ENCODE measurements at regions of chrX and their contacts with region 1.

Region 1: DNA sequence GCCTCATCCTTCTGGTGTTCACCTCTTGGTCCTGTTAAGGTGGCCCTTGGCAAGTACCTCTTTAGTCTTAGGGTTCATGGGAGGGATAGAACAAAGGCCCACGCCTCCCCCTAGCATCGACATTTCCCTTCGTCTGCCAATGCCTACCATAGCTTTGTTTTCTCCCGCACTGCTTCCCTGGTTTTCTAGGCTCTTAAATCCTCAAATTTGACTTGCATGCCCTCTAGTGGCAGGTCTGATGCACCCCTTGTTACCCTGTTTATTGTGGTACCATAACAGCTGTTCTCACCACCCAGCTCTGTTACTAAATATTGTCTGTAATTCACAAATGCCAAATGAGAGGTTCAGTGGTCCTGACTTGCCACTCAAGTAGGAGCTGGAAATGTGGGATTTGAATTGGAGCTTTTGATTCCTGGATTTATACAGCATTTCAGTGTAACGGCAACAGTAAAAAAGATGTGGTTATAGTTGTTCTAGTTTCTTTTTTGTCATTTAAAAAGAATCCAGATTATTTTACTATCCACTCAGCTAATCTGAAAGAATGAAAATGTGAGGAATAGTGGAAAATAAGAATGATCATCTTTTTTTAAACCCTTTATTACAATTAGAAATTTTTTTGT is 100.1 kb downstream of the REPS2 start:
- DNase-seq: peak; percentile 80
- H3K4me3 Mint-ChIP-seq: no peak overlapping the region
- H3K27ac Mint-ChIP-seq: peak overlapping the region; percentile 32
- H3K4me1 Mint-ChIP-seq: peaks cover 5% of the 10 kb centered on the region
- H3K27me3 Mint-ChIP-seq: peaks cover 74% of the 10 kb centered on the region
- CTCF ChIP-seq: peak; percentile 87

Region 2: GRCh38 chrX:15724911-15725310 is 1321.7 kb before region 1 on chrX:
- CTCF ChIA-PET with region 1: no interaction called
- POLR2A ChIA-PET with region 1: no interaction called
- intact Hi-C with region 1: no loop called
- DNase-seq: no peak
- H3K4me3 Mint-ChIP-seq: no peak overlapping the region
- H3K27ac Mint-ChIP-seq: no peak overlapping the region
- H3K4me1 Mint-ChIP-seq: no peaks in the 10 kb centered on the region
- H3K27me3 Mint-ChIP-seq: no peaks in the 10 kb centered on the region
- CTCF ChIP-seq: no peak

Region 3: DNA sequence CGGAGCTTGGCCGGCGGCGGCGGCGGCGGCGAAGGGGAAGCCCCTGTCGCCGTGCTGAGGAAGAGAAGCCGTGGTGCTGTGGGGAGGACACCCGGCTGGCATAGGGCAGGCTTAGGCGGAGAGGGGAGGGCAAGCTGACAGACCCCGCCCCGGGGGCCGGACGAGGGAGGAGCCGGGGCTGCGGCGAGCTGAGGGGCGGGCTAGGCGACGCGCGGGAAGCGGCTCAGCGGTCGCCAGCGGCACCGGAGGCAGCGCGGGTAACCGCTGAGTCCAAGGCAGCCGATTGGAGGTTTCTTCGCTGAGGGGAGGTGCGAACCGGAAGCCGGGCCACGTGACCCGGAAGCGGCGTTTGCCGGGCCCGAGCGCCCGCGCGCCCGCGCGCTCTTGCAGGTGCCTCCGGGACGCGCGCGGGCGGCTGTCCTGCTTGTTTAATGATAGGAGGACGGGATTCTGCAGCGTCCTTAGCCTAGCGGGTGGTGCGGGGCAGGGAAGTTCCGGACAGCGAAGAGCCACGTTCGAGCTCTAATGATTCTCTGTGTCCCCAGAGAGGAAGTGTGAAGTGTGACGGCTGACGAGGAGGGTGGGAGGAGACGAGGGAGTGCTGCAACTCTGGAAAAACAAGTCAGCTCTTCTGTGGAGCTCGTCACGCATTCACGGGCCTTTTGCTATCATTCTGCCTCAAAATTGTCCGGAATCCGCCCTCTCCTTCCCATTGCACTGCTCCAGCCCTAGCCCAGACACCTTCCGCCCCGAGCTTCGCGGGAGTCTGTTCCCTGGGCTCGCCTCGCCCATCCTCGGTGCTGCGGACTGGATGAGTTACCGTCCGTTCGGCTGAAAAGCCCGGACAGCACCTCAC is 1191.6 kb before region 1 on chrX and contains the start of gene AP1S2:
- CTCF ChIA-PET with region 1: no interaction called
- POLR2A ChIA-PET with region 1: no interaction called
- intact Hi-C with region 1: no loop called
- DNase-seq: peak; percentile 96
- H3K4me3 Mint-ChIP-seq: peak within 1 kb of the TSS; percentile 93
- H3K27ac Mint-ChIP-seq: peak within 1 kb of the TSS; percentile 61
- H3K4me1 Mint-ChIP-seq: peaks cover 6% of the 10 kb centered on the region
- H3K27me3 Mint-ChIP-seq: peaks cover 27% of the 10 kb centered on the region
- CTCF ChIP-seq: no peak
- total RNA-seq, gene AP1S2: 8.4 and 9.4 TPM in 2 replicates

Region 4: DNA sequence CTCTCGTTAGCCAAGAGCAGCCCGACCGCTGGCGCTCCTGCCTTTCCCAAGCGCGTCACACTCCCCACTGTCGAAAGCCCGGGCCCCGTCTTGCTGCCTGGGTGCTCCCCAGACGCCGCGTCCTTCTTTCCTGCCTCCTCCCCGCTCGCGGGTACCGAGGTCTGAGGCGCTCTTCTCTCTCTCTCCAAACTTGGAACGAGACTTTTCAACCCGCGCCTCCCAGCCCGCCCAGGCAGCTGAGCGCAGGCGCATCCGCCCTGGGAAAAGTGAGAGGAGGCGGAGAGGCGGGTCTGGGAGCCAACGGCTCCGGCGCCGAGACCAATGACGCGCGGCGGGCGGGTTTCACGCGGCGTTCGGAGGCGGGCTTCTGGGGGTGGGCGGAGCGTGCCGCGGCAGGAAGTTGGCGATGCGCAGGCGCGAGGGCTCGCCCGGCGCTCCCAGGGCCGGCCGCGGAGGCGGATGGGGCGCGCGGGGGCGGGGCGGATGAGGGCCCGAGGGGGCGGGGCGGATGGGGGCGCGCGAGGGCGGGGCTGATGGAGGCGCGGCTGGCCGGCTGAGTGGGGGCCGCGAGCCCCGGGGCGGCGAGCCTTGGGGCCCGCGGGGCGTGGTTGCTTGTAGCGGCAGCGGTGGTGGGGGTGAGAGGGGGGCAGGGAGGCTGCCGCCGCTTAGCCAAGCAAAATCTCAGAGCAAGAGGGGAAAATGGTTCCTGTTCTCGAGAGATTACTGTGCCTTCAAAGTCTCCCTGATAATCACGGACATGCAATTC is 176.3 kb before region 1 on chrX and contains the start of gene RBBP7:
- CTCF ChIA-PET with region 1: interaction called, 19 read pairs
- POLR2A ChIA-PET with region 1: no interaction called
- intact Hi-C with region 1: no loop called
- DNase-seq: peak; percentile 94
- H3K4me3 Mint-ChIP-seq: peak within 1 kb of the TSS; percentile 98
- H3K27ac Mint-ChIP-seq: peak within 1 kb of the TSS; percentile 90
- H3K4me1 Mint-ChIP-seq: peaks cover 15% of the 10 kb centered on the region
- H3K27me3 Mint-ChIP-seq: peaks cover 30% of the 10 kb centered on the region
- CTCF ChIP-seq: no peak
- total RNA-seq, gene RBBP7: 81.9 and 95.2 TPM in 2 replicates

Region 5: GRCh38 chrX:16892504-16893362 is 153.9 kb before region 1 on chrX:
- CTCF ChIA-PET with region 1: interaction called, 252 read pairs
- POLR2A ChIA-PET with region 1: interaction called, 3 read pairs
- intact Hi-C with region 1: no loop called
- DNase-seq: peak; percentile 88
- H3K4me3 Mint-ChIP-seq: no peak overlapping the region
- H3K27ac Mint-ChIP-seq: no peak overlapping the region
- H3K4me1 Mint-ChIP-seq: peaks cover 6% of the 10 kb centered on the region
- H3K27me3 Mint-ChIP-seq: peaks cover 67% of the 10 kb centered on the region
- CTCF ChIP-seq: peak; percentile 86

Region 6: DNA sequence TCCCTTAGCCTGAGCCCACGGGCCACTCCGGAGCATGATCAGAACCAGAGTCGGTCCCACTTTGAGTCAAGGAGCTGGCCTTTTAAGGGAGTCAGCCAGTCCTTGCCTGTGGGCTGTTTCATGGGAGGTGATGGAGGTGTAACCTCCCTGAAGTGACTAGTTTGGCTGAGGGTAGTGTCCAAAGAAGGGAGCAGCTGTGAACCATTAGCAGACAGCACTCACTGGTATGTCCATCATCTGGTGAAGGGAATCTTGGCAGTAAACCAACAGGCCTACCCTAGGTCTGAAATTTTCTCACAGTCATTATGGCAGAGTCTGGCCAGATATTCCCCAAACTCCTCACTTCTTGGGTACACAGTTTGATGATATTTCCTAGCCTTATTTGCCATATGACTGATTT is 112.4 kb before region 1 on chrX:
- CTCF ChIA-PET with region 1: no interaction called
- POLR2A ChIA-PET with region 1: no interaction called
- intact Hi-C with region 1: no loop called
- DNase-seq: no peak
- H3K4me3 Mint-ChIP-seq: no peak overlapping the region
- H3K27ac Mint-ChIP-seq: no peak overlapping the region
- H3K4me1 Mint-ChIP-seq: peaks cover 10% of the 10 kb centered on the region
- H3K27me3 Mint-ChIP-seq: peaks cover 81% of the 10 kb centered on the region
- CTCF ChIP-seq: no peak

Region 7: DNA sequence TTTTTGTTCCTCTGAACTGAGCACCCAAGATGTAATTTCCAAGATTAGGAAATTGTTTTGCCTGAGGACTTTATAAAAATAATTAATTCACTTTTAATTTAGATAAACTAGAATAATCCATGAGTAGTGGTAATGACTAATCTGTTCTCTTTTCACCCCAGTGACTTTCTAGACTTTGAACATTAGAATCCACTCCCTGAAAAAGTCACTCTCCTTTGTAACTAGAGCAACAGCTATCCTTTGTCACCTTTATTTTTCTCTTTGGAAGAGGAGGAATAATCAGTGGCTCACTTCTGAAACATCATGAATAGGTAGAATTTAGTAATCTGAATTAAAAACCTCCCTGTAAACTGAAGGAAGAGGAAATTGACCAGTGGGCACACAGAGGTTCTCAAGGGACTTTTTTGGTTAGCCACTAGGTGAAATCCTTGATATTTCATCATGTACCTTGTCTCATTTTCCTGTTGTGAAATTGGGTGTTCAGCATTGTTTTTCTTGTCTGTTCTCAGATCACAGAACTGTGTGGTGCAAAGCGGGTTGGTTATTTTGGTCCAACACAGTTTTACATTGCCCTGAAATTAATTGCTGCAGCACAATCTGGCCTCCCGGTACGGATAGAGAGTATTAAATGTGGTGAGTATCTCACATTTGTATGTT is 40.7 kb before region 1 on chrX:
- CTCF ChIA-PET with region 1: interaction called, 3 read pairs
- POLR2A ChIA-PET with region 1: no interaction called
- intact Hi-C with region 1: loop called (anchors 1 kb)
- DNase-seq: peak; percentile 69
- H3K4me3 Mint-ChIP-seq: peak overlapping the region; percentile 71
- H3K27ac Mint-ChIP-seq: peak overlapping the region; percentile 85
- H3K4me1 Mint-ChIP-seq: peaks cover 13% of the 10 kb centered on the region
- H3K27me3 Mint-ChIP-seq: peaks cover 89% of the 10 kb centered on the region
- CTCF ChIP-seq: no peak

Region 8: DNA sequence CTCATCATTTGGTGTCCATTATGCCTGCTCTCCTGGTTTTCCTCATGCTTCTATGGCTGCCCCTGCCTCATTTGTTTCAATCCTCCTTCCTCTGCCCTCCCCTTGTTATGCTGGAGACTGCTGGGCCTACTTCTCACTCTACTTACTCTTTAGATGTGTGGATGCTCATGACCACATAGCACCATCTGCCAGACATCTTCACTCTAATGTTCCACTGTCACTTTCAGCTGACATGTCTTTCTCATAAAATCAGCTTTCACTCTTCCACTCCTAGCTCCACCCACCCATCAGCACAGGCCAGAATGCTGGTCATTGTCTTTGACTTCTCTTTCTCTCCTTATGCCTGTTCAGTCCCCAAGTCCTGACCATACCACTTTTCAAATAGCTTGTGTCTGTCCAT is 13.4 kb before region 1 on chrX:
- CTCF ChIA-PET with region 1: interaction called, 41 read pairs
- POLR2A ChIA-PET with region 1: no interaction called
- intact Hi-C with region 1: no loop called
- DNase-seq: no peak
- H3K4me3 Mint-ChIP-seq: no peak overlapping the region
- H3K27ac Mint-ChIP-seq: peak overlapping the region; percentile 72
- H3K4me1 Mint-ChIP-seq: peaks cover 19% of the 10 kb centered on the region
- H3K27me3 Mint-ChIP-seq: peaks cover 61% of the 10 kb centered on the region
- CTCF ChIP-seq: no peak

Region 9: GRCh38 chrX:17062065-17062464 is 15.5 kb after region 1 on chrX:
- CTCF ChIA-PET with region 1: interaction called, 23 read pairs
- POLR2A ChIA-PET with region 1: no interaction called
- intact Hi-C with region 1: no loop called
- DNase-seq: no peak
- H3K4me3 Mint-ChIP-seq: no peak overlapping the region
- H3K27ac Mint-ChIP-seq: no peak overlapping the region
- H3K4me1 Mint-ChIP-seq: no peaks in the 10 kb centered on the region
- H3K27me3 Mint-ChIP-seq: peaks cover 44% of the 10 kb centered on the region
- CTCF ChIP-seq: no peak

Region 10: GRCh38 chrX:17082831-17083230 is 36.2 kb after region 1 on chrX:
- CTCF ChIA-PET with region 1: interaction called, 12 read pairs
- POLR2A ChIA-PET with region 1: interaction called, 4 read pairs
- intact Hi-C with region 1: loop called (anchors 2 kb)
- DNase-seq: peak; percentile 47
- H3K4me3 Mint-ChIP-seq: no peak overlapping the region
- H3K27ac Mint-ChIP-seq: no peak overlapping the region
- H3K4me1 Mint-ChIP-seq: no peaks in the 10 kb centered on the region
- H3K27me3 Mint-ChIP-seq: peaks cover 87% of the 10 kb centered on the region
- CTCF ChIP-seq: no peak

Measured in MCF 10A (cell line).